KBM-7 (cell line): ENCODE measurements at regions of chr1 and their contacts with region 1.

Region 1: DNA sequence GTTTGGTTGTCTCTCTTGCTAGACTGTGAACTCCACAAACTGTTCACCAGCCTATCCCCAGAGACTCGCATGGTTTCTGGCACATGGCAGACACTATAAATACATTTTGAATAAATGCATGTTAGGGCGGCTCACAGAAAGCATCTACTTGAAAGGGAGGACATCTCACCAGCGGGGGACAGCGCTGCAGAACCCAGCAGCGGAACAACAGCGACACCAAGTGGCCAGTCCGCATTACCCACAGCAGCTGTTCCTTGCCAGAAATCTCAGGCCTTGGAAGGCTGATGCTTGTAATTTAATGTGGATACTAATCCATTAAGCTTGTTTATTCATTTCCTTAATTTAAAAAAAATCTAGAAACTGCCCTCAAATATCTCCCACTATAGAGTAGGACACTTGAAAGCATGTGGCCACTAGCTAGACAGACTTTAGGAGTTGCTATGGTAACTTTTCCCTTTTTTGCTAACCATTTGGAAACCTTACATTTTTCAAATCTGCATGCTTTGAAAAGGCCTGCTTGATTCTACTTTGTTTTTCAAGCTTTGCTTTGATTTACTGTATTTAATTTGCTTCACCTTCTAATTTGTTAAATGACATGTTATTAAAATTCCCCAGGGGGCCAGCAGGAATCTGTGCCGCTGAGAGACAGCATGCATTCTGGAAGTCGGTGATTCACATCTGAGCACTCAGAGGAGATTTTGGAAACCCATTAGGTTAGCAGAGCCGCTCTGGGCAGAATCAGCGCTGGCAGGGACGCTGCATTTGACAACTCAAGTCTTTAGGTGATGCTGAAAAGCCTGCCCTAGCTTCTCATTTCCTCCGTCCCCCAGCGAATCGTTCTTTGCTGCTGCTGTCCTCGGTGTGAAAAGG is 63.5 kb upstream of the SSX2IP start:
- DNase-seq: peak; percentile 82

Region 2: GRCh38 chr1:83931658-83932253 is 822.0 kb before region 1 on chr1:
- in situ Hi-C with region 1: loop called (anchors 25 kb)
- DNase-seq: peak; percentile 58

Region 3: GRCh38 chr1:84143796-84144565 is 609.8 kb before region 1 on chr1 and contains the start of gene PRKACB:
- in situ Hi-C with region 1: loop called (anchors 25 kb)
- DNase-seq: peak; percentile 84

Region 4: GRCh38 chr1:84450910-84451309 is 302.8 kb before region 1 on chr1:
- in situ Hi-C with region 1: loop called (anchors 25 kb)
- DNase-seq: no peak